ENCODE measurements at regions of chr11 and their contacts with region 1.

Region 1: GRCh38 chr11:9170450-9170849 is 79.1 kb upstream of the SCUBE2 start:
- DNase-seq: no peak
- ATAC-seq: no peak
- H3K4me3 Mint-ChIP-seq: no peak overlapping the region
- H3K27ac Mint-ChIP-seq: no peak overlapping the region
- H3K4me1 Mint-ChIP-seq: peaks cover 13% of the 10 kb centered on the region
- H3K27me3 Mint-ChIP-seq: no peaks in the 10 kb centered on the region

Region 2: DNA sequence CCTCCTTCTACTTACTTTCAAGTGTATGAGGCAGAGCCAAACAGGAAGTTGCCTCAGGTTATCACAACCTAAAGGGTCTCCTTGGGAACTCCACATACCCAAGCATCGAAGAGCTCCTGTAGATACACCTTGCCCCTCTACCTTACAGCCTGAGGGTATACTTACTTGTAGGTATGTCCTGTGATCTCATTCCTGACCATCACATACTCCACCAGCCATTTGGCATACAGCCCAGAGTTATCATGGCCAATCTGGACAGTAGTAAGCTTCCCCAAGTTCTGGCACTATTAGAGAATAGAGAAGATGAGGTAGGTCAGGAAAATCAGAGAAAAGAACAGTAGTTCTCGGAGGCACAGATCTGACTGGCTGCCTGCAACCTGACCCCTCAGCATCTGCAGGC is 25.6 kb before region 1 on chr11:
- CTCF ChIA-PET with region 1: no interaction called
- DNase-seq: no peak
- ATAC-seq: no peak
- H3K4me3 Mint-ChIP-seq: no peak overlapping the region
- H3K27ac Mint-ChIP-seq: no peak overlapping the region
- H3K4me1 Mint-ChIP-seq: no peaks in the 10 kb centered on the region
- H3K27me3 Mint-ChIP-seq: no peaks in the 10 kb centered on the region

Region 3: DNA sequence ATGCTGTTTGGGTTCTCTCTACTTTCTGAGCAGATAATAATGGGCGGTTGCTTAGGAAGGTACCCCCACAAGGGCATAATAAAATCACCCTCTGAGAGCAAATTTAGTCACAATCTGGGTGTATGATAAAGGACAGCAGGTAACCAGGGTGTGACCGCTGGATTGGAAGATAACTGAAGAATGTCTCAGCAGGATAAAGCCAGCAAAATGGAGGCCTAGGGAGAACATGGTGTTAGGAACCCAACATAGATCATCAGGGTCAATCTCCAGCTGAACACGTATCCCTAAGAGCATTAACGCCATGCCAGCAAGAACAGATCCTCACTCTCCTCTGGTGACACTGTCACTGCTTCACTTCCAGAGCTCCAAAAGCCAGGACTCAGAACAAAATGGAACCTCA is 14.5 kb before region 1 on chr11:
- CTCF ChIA-PET with region 1: interaction called, 13 read pairs
- DNase-seq: no peak
- ATAC-seq: no peak
- H3K4me3 Mint-ChIP-seq: no peak overlapping the region
- H3K27ac Mint-ChIP-seq: no peak overlapping the region
- H3K4me1 Mint-ChIP-seq: peaks cover 9% of the 10 kb centered on the region
- H3K27me3 Mint-ChIP-seq: no peaks in the 10 kb centered on the region

Region 4: DNA sequence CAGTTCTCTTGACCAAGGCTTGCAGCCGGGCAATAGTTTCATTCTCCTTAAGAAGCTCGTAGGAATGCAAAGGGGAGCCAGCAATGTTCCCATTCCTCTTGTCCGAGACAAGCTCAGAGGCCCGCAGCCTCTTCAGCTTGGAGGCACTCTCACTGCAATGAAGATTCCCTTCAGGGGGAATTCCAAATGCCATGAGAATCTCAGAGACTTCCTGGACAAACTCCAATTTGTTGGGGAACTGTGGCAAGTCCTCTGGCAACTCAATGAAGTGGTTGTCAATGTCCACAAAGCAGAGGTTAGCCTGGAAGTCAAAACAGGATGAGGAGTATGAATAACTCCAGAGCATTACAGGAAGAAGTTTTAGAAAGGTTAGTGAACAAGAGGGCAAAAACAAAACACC is 10.3 kb after region 1 on chr11:
- CTCF ChIA-PET with region 1: no interaction called
- DNase-seq: no peak
- ATAC-seq: no peak
- H3K4me3 Mint-ChIP-seq: no peak overlapping the region
- H3K27ac Mint-ChIP-seq: no peak overlapping the region
- H3K4me1 Mint-ChIP-seq: peaks cover 6% of the 10 kb centered on the region
- H3K27me3 Mint-ChIP-seq: no peaks in the 10 kb centered on the region